CD4-positive, alpha-beta memory T cell (primary cell): ENCODE measurements at regions of chr15 and their contacts with region 1.

Region 1: GRCh38 chr15:68277603-68278344 is at the start of gene FEM1B:
- DNase-seq: peak; percentile 90 to 94 (median 91)
- H3K4me3 ChIP-seq: peak within 1 kb of the TSS; percentile 79 to 87
- H3K4me3 Mint-ChIP-seq: peak within 1 kb of the TSS; percentile 94 to 99 (median 96)
- H3K27ac ChIP-seq: peak within 1 kb of the TSS; percentile 90
- H3K27ac Mint-ChIP-seq: peak within 1 kb of the TSS; percentile 96 to 98 (median 98)
- H3K4me1 ChIP-seq: peaks cover 53% of the 10 kb centered on the region
- H3K4me1 Mint-ChIP-seq: peaks cover 41 to 60% (median 48%) of the 10 kb centered on the region in 4 donors
- H3K27me3 ChIP-seq: no peaks in the 10 kb centered on the region
- H3K27me3 Mint-ChIP-seq: no peaks in the 10 kb centered on the region
- total RNA-seq, gene FEM1B: 48.3 to 49.1 TPM

Region 2: DNA sequence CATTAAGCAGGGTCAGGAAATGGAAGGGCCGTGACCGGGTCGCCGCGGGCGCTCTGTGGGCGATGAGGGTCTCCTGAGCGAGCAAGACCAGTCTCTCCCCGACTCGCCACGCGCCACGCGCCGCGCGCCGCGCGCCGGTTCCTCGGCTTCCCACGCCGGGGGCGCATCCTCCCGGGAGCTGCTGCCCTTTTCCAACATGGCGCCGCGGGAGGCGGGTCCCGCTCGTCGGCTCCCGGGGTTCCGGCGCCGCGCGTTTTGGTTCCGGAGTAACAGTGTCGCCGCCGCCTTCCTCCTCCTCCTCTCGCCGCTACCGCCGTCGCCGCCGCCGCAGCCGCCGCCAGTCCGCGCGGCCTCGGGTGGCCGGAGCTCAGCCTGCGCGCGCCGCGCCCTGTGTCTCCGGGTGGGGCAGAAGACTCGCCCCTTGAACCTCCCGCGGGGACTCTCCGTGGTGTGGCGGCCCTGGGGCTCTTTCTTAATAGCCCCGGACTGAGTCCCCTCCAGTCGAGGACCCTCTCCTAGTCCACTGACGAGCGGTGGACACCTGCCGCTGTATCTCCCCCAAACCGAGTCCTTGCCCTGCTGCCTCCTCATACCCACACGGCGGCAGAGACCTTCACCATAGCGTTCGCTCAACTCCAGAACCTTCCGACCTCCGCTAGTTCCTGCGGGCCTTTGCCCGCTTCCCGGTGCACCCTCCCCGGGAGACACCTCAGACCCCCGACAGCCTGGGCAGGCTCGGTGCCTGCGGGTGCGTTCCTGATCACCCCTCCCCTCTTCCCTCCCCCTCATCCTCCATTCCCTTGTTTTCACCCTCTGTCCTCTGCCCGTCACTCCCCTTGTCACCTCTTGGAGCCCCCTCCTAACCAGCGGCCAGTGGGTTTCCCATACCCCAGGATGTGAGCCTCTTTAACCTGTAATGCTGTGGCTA is 735.1 kb before region 1 on chr15 and contains the start of gene MAP2K5:
- CTCF ChIA-PET with region 1: no interaction called
- POLR2A ChIA-PET with region 1: interaction called, 9 read pairs
- intact Hi-C with region 1: loop called (anchors 5 kb)
- DNase-seq: peak; percentile 75 to 84 (median 79)
- H3K4me3 ChIP-seq: peak within 1 kb of the TSS; percentile 67 to 81
- H3K4me3 Mint-ChIP-seq: peak within 1 kb of the TSS; percentile 94 to 98 (median 96)
- H3K27ac ChIP-seq: peak within 1 kb of the TSS; percentile 77
- H3K27ac Mint-ChIP-seq: peak within 1 kb of the TSS; percentile 90 to 100 (median 99)
- H3K4me1 ChIP-seq: peaks cover 49% of the 10 kb centered on the region
- H3K4me1 Mint-ChIP-seq: peaks cover 38 to 65% (median 51%) of the 10 kb centered on the region in 4 donors
- H3K27me3 ChIP-seq: no peaks in the 10 kb centered on the region
- H3K27me3 Mint-ChIP-seq: no peaks in the 10 kb centered on the region
- total RNA-seq, gene MAP2K5: 27.8 to 31.4 TPM

Region 3: GRCh38 chr15:68229386-68230156 is 48.2 kb before region 1 on chr15 and contains the start of gene CLN6:
- CTCF ChIA-PET with region 1: interaction called, 9 read pairs
- POLR2A ChIA-PET with region 1: interaction called, 42 read pairs
- intact Hi-C with region 1: loop called (anchors 1 kb)
- DNase-seq: peak; percentile 78 to 89 (median 84)
- H3K4me3 ChIP-seq: peak within 1 kb of the TSS; percentile 78 to 91
- H3K4me3 Mint-ChIP-seq: peak within 1 kb of the TSS; percentile 90 to 99 (median 92)
- H3K27ac ChIP-seq: peak within 1 kb of the TSS; percentile 57
- H3K27ac Mint-ChIP-seq: peak within 1 kb of the TSS; percentile 80 to 98 (median 97)
- H3K4me1 ChIP-seq: peaks cover 20% of the 10 kb centered on the region
- H3K4me1 Mint-ChIP-seq: peaks cover 20 to 30% (median 25%) of the 10 kb centered on the region in 4 donors
- H3K27me3 ChIP-seq: no peaks in the 10 kb centered on the region
- H3K27me3 Mint-ChIP-seq: no peaks in the 10 kb centered on the region
- total RNA-seq, gene CLN6: 14.5 to 15.6 TPM

Region 4: GRCh38 chr15:68292157-68292781 is 14.5 kb after region 1 on chr15:
- CTCF ChIA-PET with region 1: interaction called, 10 read pairs
- POLR2A ChIA-PET with region 1: interaction called, 22 read pairs
- intact Hi-C with region 1: no loop called
- DNase-seq: no peak
- H3K4me3 ChIP-seq: no peak overlapping the region
- H3K4me3 Mint-ChIP-seq: no peak overlapping the region
- H3K27ac ChIP-seq: no peak overlapping the region
- H3K27ac Mint-ChIP-seq: peak overlapping the region in 2 of 7 donors; percentile 29
- H3K4me1 ChIP-seq: peaks cover 31% of the 10 kb centered on the region
- H3K4me1 Mint-ChIP-seq: peaks cover 30 to 61% (median 40%) of the 10 kb centered on the region in 4 donors
- H3K27me3 ChIP-seq: no peaks in the 10 kb centered on the region
- H3K27me3 Mint-ChIP-seq: no peaks in the 10 kb centered on the region

Region 5: GRCh38 chr15:68304589-68305337 is 27.0 kb after region 1 on chr15:
- CTCF ChIA-PET with region 1: interaction called, 19 read pairs
- POLR2A ChIA-PET with region 1: interaction called, 26 read pairs
- intact Hi-C with region 1: loop called (anchors 1 kb)
- DNase-seq: no peak
- H3K4me3 ChIP-seq: no peak overlapping the region
- H3K4me3 Mint-ChIP-seq: no peak overlapping the region
- H3K27ac ChIP-seq: no peak overlapping the region
- H3K27ac Mint-ChIP-seq: peak overlapping the region in 2 of 7 donors; percentile 42 to 67
- H3K4me1 ChIP-seq: peaks cover 4% of the 10 kb centered on the region
- H3K4me1 Mint-ChIP-seq: peaks cover 8 to 25% (median 14%) of the 10 kb centered on the region in 4 donors
- H3K27me3 ChIP-seq: no peaks in the 10 kb centered on the region
- H3K27me3 Mint-ChIP-seq: peaks cover 0 to 4% of the 10 kb centered on the region in 2 donors

Region 6: DNA sequence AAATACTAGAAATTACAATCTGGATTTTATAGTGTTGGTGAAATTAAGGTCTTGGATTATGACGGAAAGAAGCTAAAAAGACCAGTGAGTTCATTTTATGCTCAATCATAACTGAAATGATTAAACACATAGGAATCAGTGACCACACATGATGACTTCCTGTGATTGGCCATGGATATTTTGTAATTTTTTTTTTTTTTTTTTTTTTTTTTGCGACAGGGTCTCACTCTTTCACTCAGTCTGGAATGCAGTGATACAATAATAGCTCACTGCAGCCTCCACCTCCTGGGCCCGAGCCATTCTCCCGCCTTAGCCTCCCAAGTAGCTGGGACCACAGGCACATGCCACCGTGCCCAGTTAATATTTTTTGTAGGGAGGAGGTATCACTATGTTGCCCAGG is 1068.3 kb after region 1 on chr15:
- CTCF ChIA-PET with region 1: no interaction called
- POLR2A ChIA-PET with region 1: no interaction called
- intact Hi-C with region 1: no loop called
- DNase-seq: no peak
- H3K4me3 ChIP-seq: no peak overlapping the region
- H3K4me3 Mint-ChIP-seq: no peak overlapping the region
- H3K27ac ChIP-seq: no peak overlapping the region
- H3K27ac Mint-ChIP-seq: no peak overlapping the region
- H3K4me1 ChIP-seq: no peaks in the 10 kb centered on the region
- H3K4me1 Mint-ChIP-seq: no peaks in the 10 kb centered on the region
- H3K27me3 ChIP-seq: no peaks in the 10 kb centered on the region
- H3K27me3 Mint-ChIP-seq: peaks cover 0 to 8% of the 10 kb centered on the region in 2 donors